ENCODE measurements at regions of chr14 and their contacts with region 1.

Region 1: DNA sequence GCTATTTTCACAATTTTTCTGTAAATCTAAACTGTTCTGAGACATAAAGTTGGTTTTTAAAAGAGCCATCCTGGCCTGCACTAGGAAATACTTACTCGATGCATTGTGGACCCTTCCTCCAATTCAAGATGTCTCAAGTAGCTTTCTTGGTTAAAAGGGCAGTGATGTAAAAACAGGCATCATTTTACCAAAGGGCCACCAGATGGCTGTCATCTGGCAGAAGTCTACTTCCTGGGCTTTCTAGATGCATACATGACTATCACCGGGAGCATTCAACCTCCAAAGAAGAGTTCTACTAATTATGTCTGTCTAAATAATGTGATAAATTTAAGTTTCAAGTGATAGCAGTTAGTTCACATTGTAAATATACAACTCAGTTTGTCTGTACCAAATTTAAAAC is 96.8 kb upstream of the FRMD6 start:
- DNase-seq: peak in 1 of 2 experiments; percentile 28
- H3K4me3 ChIP-seq: no peak overlapping the region
- H3K4me3 Mint-ChIP-seq: no peak overlapping the region
- H3K27ac Mint-ChIP-seq: peak overlapping the region; percentile 17
- H3K4me1 ChIP-seq: peaks cover 19% of the 10 kb centered on the region
- H3K4me1 Mint-ChIP-seq: peaks cover 7% of the 10 kb centered on the region
- H3K27me3 ChIP-seq: no peaks in the 10 kb centered on the region
- H3K27me3 Mint-ChIP-seq: no peaks in the 10 kb centered on the region
- CTCF ChIP-seq: peak; percentile 19 to 48

Region 2: GRCh38 chr14:51398898-51399297 is 156.1 kb before region 1 on chr14:
- CTCF ChIA-PET with region 1: no interaction called
- POLR2A ChIA-PET with region 1: no interaction called
- intact Hi-C with region 1: no loop called
- DNase-seq: no peak
- H3K4me3 ChIP-seq: no peak overlapping the region
- H3K4me3 Mint-ChIP-seq: no peak overlapping the region
- H3K27ac Mint-ChIP-seq: no peak overlapping the region
- H3K4me1 ChIP-seq: no peaks in the 10 kb centered on the region
- H3K4me1 Mint-ChIP-seq: peaks cover 8% of the 10 kb centered on the region
- H3K27me3 ChIP-seq: no peaks in the 10 kb centered on the region
- H3K27me3 Mint-ChIP-seq: no peaks in the 10 kb centered on the region
- CTCF ChIP-seq: no peak

Region 3: DNA sequence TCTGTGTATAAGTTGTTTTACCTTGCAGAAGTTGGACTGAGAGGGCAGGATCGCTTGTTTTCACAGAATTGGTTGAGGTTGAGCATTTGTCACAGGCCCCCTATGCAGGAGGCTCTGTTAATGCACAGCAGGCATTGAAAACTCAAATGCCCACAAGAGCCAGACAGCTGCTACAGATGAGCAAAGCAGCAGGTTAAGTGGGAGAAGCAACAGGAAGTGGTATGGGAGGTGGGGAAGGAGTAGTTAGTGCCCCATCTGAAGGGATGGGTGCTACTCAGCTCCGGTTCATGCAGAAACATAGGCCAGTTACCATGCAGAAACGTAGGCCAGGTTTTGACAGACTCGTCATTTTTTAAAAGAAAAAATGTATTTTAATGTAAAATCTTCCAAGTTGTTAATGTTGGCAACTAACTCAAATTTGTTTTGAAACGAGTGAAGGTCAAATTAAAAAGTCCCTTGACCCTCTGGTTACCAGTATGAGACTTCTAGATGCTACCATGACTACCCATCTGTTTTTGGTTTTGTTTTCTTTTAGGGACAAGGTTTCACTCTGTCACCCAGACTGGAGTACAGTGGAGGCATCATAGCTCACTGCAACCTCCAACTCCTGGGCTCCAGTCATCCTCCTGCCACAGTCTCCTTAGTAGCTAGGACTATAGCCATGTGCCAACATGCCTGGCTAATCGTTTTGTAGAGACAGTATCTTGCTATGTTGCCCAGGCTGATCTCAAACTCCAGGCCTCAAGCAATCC is 12.1 kb after region 1 on chr14:
- CTCF ChIA-PET with region 1: no interaction called
- POLR2A ChIA-PET with region 1: no interaction called
- intact Hi-C with region 1: no loop called
- DNase-seq: no peak
- H3K4me3 ChIP-seq: no peak overlapping the region
- H3K4me3 Mint-ChIP-seq: no peak overlapping the region
- H3K27ac Mint-ChIP-seq: no peak overlapping the region
- H3K4me1 ChIP-seq: peaks cover 27% of the 10 kb centered on the region
- H3K4me1 Mint-ChIP-seq: peaks cover 17% of the 10 kb centered on the region
- H3K27me3 ChIP-seq: no peaks in the 10 kb centered on the region
- H3K27me3 Mint-ChIP-seq: no peaks in the 10 kb centered on the region
- CTCF ChIP-seq: no peak

Region 4: GRCh38 chr14:51604078-51604477 is 49.1 kb after region 1 on chr14:
- CTCF ChIA-PET with region 1: no interaction called
- POLR2A ChIA-PET with region 1: interaction called, 10 read pairs
- intact Hi-C with region 1: no loop called
- DNase-seq: peak in 1 of 2 experiments; percentile 13
- H3K4me3 ChIP-seq: no peak overlapping the region
- H3K4me3 Mint-ChIP-seq: no peak overlapping the region
- H3K27ac Mint-ChIP-seq: peak overlapping the region; percentile 72
- H3K4me1 ChIP-seq: peaks cover 9% of the 10 kb centered on the region
- H3K4me1 Mint-ChIP-seq: peaks cover 25% of the 10 kb centered on the region
- H3K27me3 ChIP-seq: no peaks in the 10 kb centered on the region
- H3K27me3 Mint-ChIP-seq: no peaks in the 10 kb centered on the region
- CTCF ChIP-seq: no peak

Region 5: GRCh38 chr14:51780006-51780692 is 225.2 kb after region 1 on chr14:
- CTCF ChIA-PET with region 1: interaction called, 6 read pairs
- POLR2A ChIA-PET with region 1: no interaction called
- intact Hi-C with region 1: loop called (anchors 10 kb)
- DNase-seq: peak; percentile 64 to 77
- H3K4me3 ChIP-seq: no peak overlapping the region
- H3K4me3 Mint-ChIP-seq: peak overlapping the region; percentile 38
- H3K27ac Mint-ChIP-seq: no peak overlapping the region
- H3K4me1 ChIP-seq: no peaks in the 10 kb centered on the region
- H3K4me1 Mint-ChIP-seq: peaks cover 8% of the 10 kb centered on the region
- H3K27me3 ChIP-seq: no peaks in the 10 kb centered on the region
- H3K27me3 Mint-ChIP-seq: peaks cover 3% of the 10 kb centered on the region
- CTCF ChIP-seq: peak; percentile 79 to 87

Measured in Caco-2 (cell line).